Vagina (tissue), 2 donors: ENCODE measurements at regions of chr10 and their contacts with region 1.

Region 1: DNA sequence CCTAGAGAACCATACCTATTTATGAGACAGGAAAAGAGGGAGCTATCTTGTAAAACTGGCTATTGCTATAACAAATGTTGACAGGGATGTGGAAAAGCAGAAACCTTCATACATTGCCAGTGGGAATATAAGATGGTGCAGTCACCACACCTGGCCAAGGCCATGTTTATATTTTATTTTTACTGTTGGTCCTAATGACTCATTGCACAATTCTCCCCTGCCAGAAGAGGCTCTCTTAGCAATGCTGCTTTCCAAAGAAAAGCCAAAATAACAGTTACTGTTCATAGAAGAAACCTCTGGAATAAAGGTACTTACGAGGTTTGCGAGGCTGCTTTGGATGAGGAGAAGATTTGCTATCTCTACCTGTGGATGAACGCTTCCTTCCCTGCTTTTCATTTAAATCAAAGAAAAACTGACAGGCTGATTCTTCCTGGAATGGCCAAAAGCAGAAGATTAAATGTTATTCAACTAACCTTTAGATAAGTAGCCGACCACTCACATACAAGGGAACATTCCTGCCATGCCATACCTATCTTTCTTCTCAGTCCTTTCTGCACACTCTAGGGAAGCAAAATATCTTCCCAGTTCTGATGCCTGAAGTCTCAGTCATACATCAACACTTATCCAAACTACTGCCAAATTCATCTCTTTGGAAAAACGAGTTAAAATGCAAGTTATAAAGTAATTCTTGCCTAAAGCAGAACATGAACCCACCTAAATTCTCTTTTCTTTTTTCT is 16.3 kb upstream of the CHUK start:
- DNase-seq: no peak
- H3K4me3 ChIP-seq: no peak overlapping the region
- H3K27ac ChIP-seq: no peak overlapping the region
- H3K4me1 ChIP-seq: no peaks in the 10 kb centered on the region
- H3K27me3 ChIP-seq: no peaks in the 10 kb centered on the region
- CTCF ChIP-seq: no peak
- POLR2A ChIP-seq: no peak

Region 2: GRCh38 chr10:100743626-100744135 is 498.0 kb after region 1 on chr10:
- intact Hi-C with region 1: no loop called
- DNase-seq: no peak
- H3K4me3 ChIP-seq: no peak overlapping the region
- H3K27ac ChIP-seq: no peak overlapping the region
- H3K4me1 ChIP-seq: peaks cover 53% of the 10 kb centered on the region
- H3K27me3 ChIP-seq: peaks cover 31% of the 10 kb centered on the region
- CTCF ChIP-seq: peak in 2 of 3 experiments; percentile 16 to 17
- POLR2A ChIP-seq: no peak

Region 3: GRCh38 chr10:102055647-102056419 is 1810.2 kb after region 1 on chr10 and contains the start of gene ARMH3:
- intact Hi-C with region 1: loop called (anchors 5 kb)
- DNase-seq: peak in 1 of 2 donors; percentile 93
- H3K4me3 ChIP-seq: peak within 1 kb of the TSS; percentile 68 to 90
- H3K27ac ChIP-seq: peak within 1 kb of the TSS; percentile 80
- H3K4me1 ChIP-seq: peaks cover 37% of the 10 kb centered on the region
- H3K27me3 ChIP-seq: no peaks in the 10 kb centered on the region
- CTCF ChIP-seq: no peak
- POLR2A ChIP-seq: peak in 1 of 2 donors; percentile 27
- total RNA-seq, gene ARMH3: 26.5 TPM